Aorta (tissue), 5 donors: ENCODE measurements at regions of chr9 and their contacts with region 1.

Region 1: GRCh38 chr9:107489687-107490605 is at the start of gene KLF4:
- DNase-seq: peak; percentile 92 to 97
- ATAC-seq: peak; percentile 87
- H3K4me3 ChIP-seq: peak within 1 kb of the TSS; percentile 36 to 41
- H3K27ac ChIP-seq: peak within 1 kb of the TSS; percentile 10 to 80
- H3K4me1 ChIP-seq: no peaks in the 10 kb centered on the region
- H3K27me3 ChIP-seq: no peaks in the 10 kb centered on the region
- total RNA-seq, gene KLF4: 87.8 to 202 TPM

Region 2: DNA sequence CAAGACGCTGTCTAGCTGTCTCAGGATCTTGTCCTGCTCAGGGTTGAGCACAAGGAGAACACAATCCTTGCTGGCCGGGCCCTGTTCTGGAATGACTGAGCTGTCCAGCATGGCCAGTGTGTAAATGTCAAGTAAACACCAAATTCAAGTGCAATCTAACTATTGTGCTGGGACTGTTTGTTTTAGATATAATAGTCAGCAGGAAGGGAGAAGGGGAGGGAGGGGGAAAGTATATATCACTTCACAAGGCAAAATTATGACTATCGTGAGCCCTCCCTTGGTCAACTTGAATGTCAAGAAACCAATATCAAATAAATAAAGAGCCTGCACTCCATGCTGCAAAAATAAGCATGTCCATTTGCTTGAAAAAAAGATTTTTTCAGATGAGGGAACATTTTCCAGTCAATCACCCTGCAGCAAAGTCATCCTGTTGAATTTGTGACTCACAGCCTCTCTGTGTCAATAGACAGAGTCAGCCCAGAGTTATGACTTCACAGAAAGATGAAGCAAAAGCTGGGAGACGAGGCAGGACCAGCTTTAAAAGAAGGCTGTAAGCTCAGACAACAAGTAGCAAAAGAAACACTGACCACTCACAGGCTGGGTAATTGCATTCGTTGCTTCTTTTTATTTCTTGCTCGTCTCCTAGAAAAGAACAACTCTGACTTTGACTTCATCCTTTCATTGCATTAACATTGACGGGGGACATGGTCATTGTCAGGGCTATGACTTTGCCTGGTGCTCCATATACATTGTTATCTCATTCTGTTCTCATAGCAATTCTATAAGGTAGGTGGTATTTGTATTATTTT is 14.8 kb after region 1 on chr9:
- intact Hi-C with region 1: loop called in 1 of 2 experiments (anchors 2 kb)
- DNase-seq: no peak
- ATAC-seq: peak; percentile 87
- H3K4me3 ChIP-seq: no peak overlapping the region
- H3K27ac ChIP-seq: peak overlapping the region; percentile 52 to 69
- H3K4me1 ChIP-seq: peaks cover 0 to 4% of the 10 kb centered on the region in 2 donors
- H3K27me3 ChIP-seq: no peaks in the 10 kb centered on the region

Region 3: GRCh38 chr9:107732781-107733522 is 243.0 kb after region 1 on chr9:
- intact Hi-C with region 1: loop called in 1 of 2 experiments (anchors 5 kb)
- DNase-seq: peak in 1 of 2 donors; percentile 82
- ATAC-seq: peak; percentile 56
- H3K4me3 ChIP-seq: peak overlapping the region in 1 of 2 donors; percentile 37
- H3K27ac ChIP-seq: peak overlapping the region; percentile 88 to 95
- H3K4me1 ChIP-seq: peaks cover 0 to under 1% of the 10 kb centered on the region in 2 donors
- H3K27me3 ChIP-seq: no peaks in the 10 kb centered on the region

Region 4: GRCh38 chr9:107847978-107848964 is 358.3 kb after region 1 on chr9:
- intact Hi-C with region 1: loop called in 1 of 2 experiments (anchors 2 kb)
- DNase-seq: no peak
- ATAC-seq: peak; percentile 33
- H3K4me3 ChIP-seq: no peak overlapping the region
- H3K27ac ChIP-seq: peak overlapping the region in 1 of 2 donors; percentile 58
- H3K4me1 ChIP-seq: peaks cover 0 to 2% of the 10 kb centered on the region in 2 donors
- H3K27me3 ChIP-seq: no peaks in the 10 kb centered on the region

Region 5: GRCh38 chr9:108182950-108183381 is 693.0 kb after region 1 on chr9:
- intact Hi-C with region 1: loop called in 1 of 2 experiments (anchors 5 kb)
- DNase-seq: peak in 1 of 2 donors; percentile 54
- ATAC-seq: no peak
- H3K4me3 ChIP-seq: no peak overlapping the region
- H3K27ac ChIP-seq: no peak overlapping the region
- H3K4me1 ChIP-seq: peaks cover 0 to 3% of the 10 kb centered on the region in 2 donors
- H3K27me3 ChIP-seq: no peaks in the 10 kb centered on the region

Region 6: DNA sequence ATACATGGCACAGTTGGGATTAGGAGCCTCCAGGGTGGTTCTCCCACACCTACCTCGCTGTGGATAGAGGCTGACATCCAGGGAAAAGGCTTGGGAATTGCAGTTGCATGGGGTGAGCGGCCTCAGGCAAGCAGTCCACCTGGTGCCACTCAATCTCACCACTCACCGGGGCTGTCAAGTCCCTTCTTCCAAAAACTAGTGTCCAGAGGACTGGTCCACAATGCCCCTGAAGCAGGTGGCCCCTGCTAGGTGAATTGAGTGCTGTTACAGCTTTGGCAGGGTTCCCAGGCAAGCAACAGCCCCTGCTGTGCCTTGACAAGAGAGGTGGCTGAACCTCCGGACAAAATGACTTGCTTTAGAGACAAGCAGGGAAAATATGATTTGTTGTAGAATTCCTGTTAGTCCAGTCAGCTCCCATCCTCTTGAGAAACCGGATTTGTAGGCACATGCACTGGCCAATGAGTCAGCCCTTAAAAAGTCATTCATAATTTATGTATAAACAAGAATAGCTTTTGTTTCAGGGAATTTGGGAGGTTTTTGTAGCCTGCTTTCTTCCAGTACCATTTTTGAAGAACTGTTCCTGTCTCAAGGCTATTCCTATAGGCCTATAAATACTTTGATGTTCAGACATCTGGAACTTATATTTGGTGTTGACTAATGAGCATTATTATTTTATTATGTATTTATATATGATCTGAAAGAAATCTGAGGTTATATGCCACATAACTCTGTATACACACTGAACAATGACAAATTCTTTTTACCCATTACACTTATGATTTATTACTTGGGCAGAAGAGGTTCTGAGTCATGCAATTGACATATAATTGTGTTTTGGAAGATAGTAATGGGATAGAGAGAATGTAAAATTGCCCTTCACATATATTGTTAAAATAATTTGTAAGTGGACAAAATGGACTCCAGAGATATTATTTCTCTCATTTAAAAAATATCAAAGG is 954.7 kb after region 1 on chr9:
- intact Hi-C with region 1: loop called in 1 of 2 experiments (anchors 10 kb)
- DNase-seq: peak in 1 of 2 donors; percentile 68
- ATAC-seq: peak; percentile 71
- H3K4me3 ChIP-seq: no peak overlapping the region
- H3K27ac ChIP-seq: peak overlapping the region in 1 of 2 donors; percentile 30
- H3K4me1 ChIP-seq: peaks cover 0 to 3% of the 10 kb centered on the region in 2 donors
- H3K27me3 ChIP-seq: no peaks in the 10 kb centered on the region